ENCODE measurements at regions of chr7 and their contacts with region 1.

Region 1: GRCh38 chr7:157339777-157340677 is 3.2 kb downstream of the DNAJB6 start:
- DNase-seq: peak; percentile 72
- H3K4me3 ChIP-seq: peak overlapping the region; percentile 17
- H3K27ac ChIP-seq: no peak overlapping the region
- H3K27me3 ChIP-seq: no peaks in the 10 kb centered on the region
- CTCF ChIP-seq: peak; percentile 94

Region 2: DNA sequence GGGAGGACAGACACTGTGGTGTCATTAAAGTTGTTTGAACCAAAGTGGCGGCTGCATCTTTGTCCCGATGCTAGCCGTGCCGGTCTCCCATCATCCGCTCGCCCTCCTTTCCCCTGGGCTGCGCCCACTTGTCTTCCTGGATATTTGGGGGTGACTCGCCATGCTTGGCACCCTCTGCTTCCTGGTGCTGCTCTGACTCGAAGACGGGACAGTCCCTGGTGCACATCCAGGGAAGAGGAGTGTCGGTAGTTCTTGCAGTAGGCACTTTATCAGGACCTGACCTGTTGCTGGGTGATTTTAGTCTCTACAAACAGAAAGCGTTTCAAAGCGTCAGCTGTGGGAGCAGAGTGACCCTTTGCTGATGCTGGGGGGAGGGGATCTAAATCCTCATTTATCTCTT is 71.5 kb before region 1 on chr7:
- in situ Hi-C with region 1: loop called (anchors 10 kb)
- DNase-seq: no peak
- H3K4me3 ChIP-seq: no peak overlapping the region
- H3K27ac ChIP-seq: no peak overlapping the region
- H3K27me3 ChIP-seq: no peaks in the 10 kb centered on the region
- CTCF ChIP-seq: no peak